MCF 10A (cell line): ENCODE measurements at regions of chr5 and their contacts with region 1.

Region 1: GRCh38 chr5:168624850-168625357 is 45.7 kb upstream of the PANK3 start:
- DNase-seq: peak; percentile 91
- H3K4me3 Mint-ChIP-seq: peak overlapping the region; percentile 4
- H3K27ac Mint-ChIP-seq: peak overlapping the region; percentile 16
- H3K4me1 Mint-ChIP-seq: peaks cover 23% of the 10 kb centered on the region
- H3K27me3 Mint-ChIP-seq: peaks cover 4% of the 10 kb centered on the region
- CTCF ChIP-seq: no peak

Region 2: DNA sequence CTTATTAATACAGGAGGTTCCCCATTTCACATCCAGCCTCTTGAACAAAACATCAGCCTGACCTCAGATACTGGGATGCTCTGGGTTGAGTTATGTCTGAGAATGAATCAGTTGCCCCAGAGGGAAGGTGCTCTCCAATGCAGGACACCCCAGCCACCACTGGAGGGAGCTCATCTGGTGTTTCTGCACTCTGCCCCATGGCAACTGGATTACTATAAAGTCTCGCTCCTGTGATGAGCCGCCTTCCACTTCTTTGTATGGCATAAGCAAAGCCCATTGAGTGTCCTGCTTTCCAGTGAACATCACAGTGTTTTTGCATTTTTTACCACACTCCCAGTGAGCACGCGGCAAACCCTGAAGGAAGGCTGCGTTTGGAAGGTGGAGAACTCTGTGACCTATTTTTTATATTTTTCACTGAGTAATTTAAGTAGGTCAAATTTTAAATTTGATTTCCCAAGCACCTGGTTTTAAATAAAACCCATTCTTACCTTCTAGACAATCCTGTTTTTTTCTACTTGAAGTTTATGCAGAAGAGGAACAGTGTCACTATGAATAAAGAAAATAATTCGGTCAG is 510.4 kb before region 1 on chr5:
- CTCF ChIA-PET with region 1: no interaction called
- POLR2A ChIA-PET with region 1: no interaction called
- intact Hi-C with region 1: no loop called
- DNase-seq: peak; percentile 82
- H3K4me3 Mint-ChIP-seq: no peak overlapping the region
- H3K27ac Mint-ChIP-seq: no peak overlapping the region
- H3K4me1 Mint-ChIP-seq: peaks cover 5% of the 10 kb centered on the region
- H3K27me3 Mint-ChIP-seq: peaks cover 39% of the 10 kb centered on the region
- CTCF ChIP-seq: peak; percentile 89

Region 3: DNA sequence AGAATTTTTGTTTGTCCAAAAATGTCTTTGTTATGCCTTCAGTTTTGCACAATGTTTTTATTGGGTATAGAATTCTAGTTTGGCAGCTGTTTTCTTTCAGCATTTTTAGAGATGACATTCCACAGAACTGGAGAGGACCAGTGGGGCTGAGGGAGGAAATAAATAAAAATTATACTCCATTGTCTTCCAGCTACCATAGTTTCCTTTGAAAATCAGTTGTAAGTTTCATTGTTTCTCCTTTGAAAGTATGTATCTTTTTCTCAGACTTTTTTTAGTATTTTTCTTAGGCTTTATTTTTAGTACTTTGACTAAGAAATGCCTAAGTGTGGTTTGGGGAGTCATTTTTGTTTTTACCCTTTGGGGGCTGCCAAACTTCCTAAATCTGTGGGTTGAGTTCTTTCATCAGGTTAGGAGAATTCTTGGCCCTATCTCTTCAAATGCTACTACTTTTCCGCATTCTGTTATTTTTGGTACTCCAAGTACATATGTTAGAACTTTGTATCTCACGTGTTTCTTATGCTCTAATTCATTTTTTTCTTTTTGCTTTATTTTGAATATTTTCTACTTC is 111.0 kb before region 1 on chr5:
- CTCF ChIA-PET with region 1: no interaction called
- POLR2A ChIA-PET with region 1: no interaction called
- intact Hi-C with region 1: no loop called
- DNase-seq: no peak
- H3K4me3 Mint-ChIP-seq: no peak overlapping the region
- H3K27ac Mint-ChIP-seq: no peak overlapping the region
- H3K4me1 Mint-ChIP-seq: no peaks in the 10 kb centered on the region
- H3K27me3 Mint-ChIP-seq: no peaks in the 10 kb centered on the region
- CTCF ChIP-seq: no peak

Region 4: GRCh38 chr5:168654211-168654721 is 29.4 kb after region 1 on chr5:
- CTCF ChIA-PET with region 1: interaction called, 3 read pairs
- POLR2A ChIA-PET with region 1: interaction called, 11 read pairs
- intact Hi-C with region 1: no loop called
- DNase-seq: no peak
- H3K4me3 Mint-ChIP-seq: no peak overlapping the region
- H3K27ac Mint-ChIP-seq: no peak overlapping the region
- H3K4me1 Mint-ChIP-seq: peaks cover 44% of the 10 kb centered on the region
- H3K27me3 Mint-ChIP-seq: no peaks in the 10 kb centered on the region
- CTCF ChIP-seq: no peak

Region 5: GRCh38 chr5:168822745-168823281 is 197.9 kb after region 1 on chr5:
- CTCF ChIA-PET with region 1: no interaction called
- POLR2A ChIA-PET with region 1: no interaction called
- intact Hi-C with region 1: no loop called
- DNase-seq: peak; percentile 60
- H3K4me3 Mint-ChIP-seq: no peak overlapping the region
- H3K27ac Mint-ChIP-seq: no peak overlapping the region
- H3K4me1 Mint-ChIP-seq: no peaks in the 10 kb centered on the region
- H3K27me3 Mint-ChIP-seq: no peaks in the 10 kb centered on the region
- CTCF ChIP-seq: no peak